MCF 10A (cell line): ENCODE measurements at regions of chr1 and their contacts with region 1.

Region 1: DNA sequence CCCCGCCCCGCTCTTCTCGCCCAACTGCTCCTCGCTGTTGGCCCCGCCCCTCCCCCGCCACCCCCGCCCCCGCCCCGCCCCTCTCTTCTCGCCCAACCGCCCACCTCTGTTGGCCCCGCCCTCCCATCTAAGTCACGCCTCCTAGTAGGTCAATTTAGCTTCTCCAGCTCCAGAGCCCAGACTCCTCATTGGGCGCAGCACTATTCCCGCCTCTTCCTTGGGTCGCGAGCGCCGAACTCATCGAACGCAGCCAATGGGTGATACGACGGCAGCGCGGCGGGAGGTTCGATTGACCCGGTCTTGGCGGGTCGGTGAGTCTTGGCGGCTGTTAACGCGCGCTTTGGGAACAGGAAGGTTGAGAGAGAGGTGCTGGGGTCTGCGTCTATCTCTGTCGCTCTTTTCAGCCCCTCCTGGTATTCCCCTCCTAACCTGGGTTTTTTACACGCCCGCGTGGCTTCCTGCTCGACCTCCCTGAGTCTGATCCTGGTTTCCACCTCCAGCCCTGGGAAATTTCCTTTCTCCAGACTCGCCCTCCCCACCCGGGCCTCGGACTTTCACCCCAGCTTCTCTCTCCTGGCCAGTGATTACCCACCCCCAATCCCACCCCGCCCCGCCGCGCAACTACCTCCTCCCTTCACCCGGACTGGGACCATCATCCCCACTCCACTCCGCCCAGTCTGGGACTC is at the start of gene RAD54L:
- DNase-seq: peak; percentile 99
- H3K4me3 Mint-ChIP-seq: peak within 1 kb of the TSS; percentile 81
- H3K27ac Mint-ChIP-seq: peak within 1 kb of the TSS; percentile 91
- H3K4me1 Mint-ChIP-seq: peaks cover 33% of the 10 kb centered on the region
- H3K27me3 Mint-ChIP-seq: no peaks in the 10 kb centered on the region
- CTCF ChIP-seq: no peak
- total RNA-seq, gene RAD54L: 4.5 and 5.0 TPM in 2 replicates

Region 2: GRCh38 chr1:46236882-46237281 is 10.7 kb before region 1 on chr1:
- CTCF ChIA-PET with region 1: interaction called, 26 read pairs
- POLR2A ChIA-PET with region 1: interaction called, 3 read pairs
- intact Hi-C with region 1: no loop called
- DNase-seq: no peak
- H3K4me3 Mint-ChIP-seq: no peak overlapping the region
- H3K27ac Mint-ChIP-seq: no peak overlapping the region
- H3K4me1 Mint-ChIP-seq: no peaks in the 10 kb centered on the region
- H3K27me3 Mint-ChIP-seq: no peaks in the 10 kb centered on the region
- CTCF ChIP-seq: no peak

Region 3: GRCh38 chr1:46340404-46341221 is 93.0 kb after region 1 on chr1 and contains the start of gene NSUN4:
- CTCF ChIA-PET with region 1: interaction called, 8 read pairs
- POLR2A ChIA-PET with region 1: interaction called, 20 read pairs
- intact Hi-C with region 1: loop called (anchors 2 kb)
- DNase-seq: peak; percentile 92
- H3K4me3 Mint-ChIP-seq: peak within 1 kb of the TSS; percentile 96
- H3K27ac Mint-ChIP-seq: peak within 1 kb of the TSS; percentile 99
- H3K4me1 Mint-ChIP-seq: peaks cover 26% of the 10 kb centered on the region
- H3K27me3 Mint-ChIP-seq: no peaks in the 10 kb centered on the region
- CTCF ChIP-seq: peak; percentile 75
- total RNA-seq, gene NSUN4: 27.4 and 28.4 TPM in 2 replicates